Spleen (tissue), 13 donors: ENCODE measurements at regions of chr3 and their contacts with region 1.

Region 1: GRCh38 chr3:155323063-155323666 is 29.7 kb upstream of the STRIT1 start:
- DNase-seq: no peak
- H3K4me3 ChIP-seq: no peak overlapping the region
- H3K27ac ChIP-seq: no peak overlapping the region
- H3K4me1 ChIP-seq: no peaks in the 10 kb centered on the region
- H3K27me3 ChIP-seq: no peaks in the 10 kb centered on the region
- CTCF ChIP-seq: peak in 7 of 11 experiments; percentile 39 to 56 (median 48)
- POLR2A ChIP-seq: no peak

Region 2: GRCh38 chr3:154758109-154758868 is 564.9 kb before region 1 on chr3:
- intact Hi-C with region 1: loop called (anchors 10 kb)
- DNase-seq: no peak
- H3K4me3 ChIP-seq: no peak overlapping the region
- H3K27ac ChIP-seq: no peak overlapping the region
- H3K4me1 ChIP-seq: no peaks in the 10 kb centered on the region
- H3K27me3 ChIP-seq: no peaks in the 10 kb centered on the region
- CTCF ChIP-seq: peak in 5 of 11 experiments; percentile 15 to 29 (median 26)
- POLR2A ChIP-seq: no peak

Region 3: GRCh38 chr3:154954753-154955152 is 368.4 kb before region 1 on chr3:
- intact Hi-C with region 1: loop called (anchors 10 kb)
- DNase-seq: no peak
- H3K4me3 ChIP-seq: no peak overlapping the region
- H3K27ac ChIP-seq: no peak overlapping the region
- H3K4me1 ChIP-seq: no peaks in the 10 kb centered on the region
- H3K27me3 ChIP-seq: no peaks in the 10 kb centered on the region
- CTCF ChIP-seq: peak in 4 of 11 experiments; percentile 26 to 34 (median 30)
- POLR2A ChIP-seq: no peak